Heart right ventricle (tissue), 16 donors: ENCODE measurements at regions of chr2 and their contacts with region 1.

Region 1: GRCh38 chr2:221372899-221373298 is 199.2 kb downstream of the EPHA4 start:
- DNase-seq: no peak
- ATAC-seq: no peak
- H3K4me3 ChIP-seq: no peak overlapping the region
- H3K27ac ChIP-seq: no peak overlapping the region
- H3K4me1 ChIP-seq: peaks cover 0 to 9% (median 0%) of the 10 kb centered on the region in 9 donors
- H3K27me3 ChIP-seq: peaks cover 0 to 6% (median 0%) of the 10 kb centered on the region in 7 donors
- CTCF ChIP-seq: no peak

Region 2: DNA sequence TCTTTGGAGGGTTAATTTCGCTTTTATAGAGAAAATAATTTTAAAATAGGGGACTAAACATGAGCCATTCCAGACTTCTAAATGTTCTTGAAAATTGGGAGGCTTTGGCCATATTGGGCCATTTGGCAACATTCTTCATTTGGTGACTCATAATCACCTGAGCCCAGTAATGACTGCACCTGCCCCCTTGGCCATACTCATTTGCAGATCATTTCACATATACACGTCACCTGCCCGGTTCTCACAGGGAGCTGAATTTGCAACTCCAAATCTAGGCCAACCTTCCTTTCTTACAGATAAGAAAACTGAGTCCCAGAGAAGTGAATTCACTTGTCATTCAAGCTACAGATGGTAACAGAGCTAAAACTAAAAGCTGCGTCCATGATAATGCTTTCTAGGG is 90.5 kb before region 1 on chr2:
- intact Hi-C with region 1: no loop called
- DNase-seq: no peak
- ATAC-seq: no peak
- H3K4me3 ChIP-seq: no peak overlapping the region
- H3K27ac ChIP-seq: no peak overlapping the region
- H3K4me1 ChIP-seq: no peaks in the 10 kb centered on the region
- H3K27me3 ChIP-seq: no peaks in the 10 kb centered on the region
- CTCF ChIP-seq: no peak

Region 3: DNA sequence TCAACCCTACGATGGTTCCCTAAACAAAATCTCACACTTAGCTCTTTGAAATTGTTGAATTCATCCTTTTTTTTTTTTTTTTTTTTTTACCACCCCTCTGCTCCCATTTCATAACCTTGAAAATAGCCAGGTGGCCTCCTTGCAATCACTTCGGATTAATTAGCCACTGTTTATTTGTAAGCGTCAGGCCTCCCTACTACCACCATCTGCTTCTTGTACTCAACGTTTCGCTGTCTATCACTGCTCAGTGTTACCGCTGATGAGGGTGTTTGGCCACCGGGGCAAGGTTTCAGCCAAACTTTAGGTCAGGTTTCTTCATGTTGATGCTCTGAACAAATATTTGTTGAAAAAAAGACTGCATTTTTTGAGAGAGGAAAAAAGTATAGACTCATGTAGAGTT is 16.0 kb after region 1 on chr2:
- intact Hi-C with region 1: loop called in 1 of 10 experiments (anchors 1 kb)
- DNase-seq: no peak
- ATAC-seq: no peak
- H3K4me3 ChIP-seq: no peak overlapping the region
- H3K27ac ChIP-seq: no peak overlapping the region
- H3K4me1 ChIP-seq: no peaks in the 10 kb centered on the region
- H3K27me3 ChIP-seq: peaks cover 0 to 4% (median 0%) of the 10 kb centered on the region in 7 donors
- CTCF ChIP-seq: no peak